Naive thymus-derived CD4-positive, alpha-beta T cell (primary cell): ENCODE measurements at regions of chr3 and their contacts with region 1.

Region 1: DNA sequence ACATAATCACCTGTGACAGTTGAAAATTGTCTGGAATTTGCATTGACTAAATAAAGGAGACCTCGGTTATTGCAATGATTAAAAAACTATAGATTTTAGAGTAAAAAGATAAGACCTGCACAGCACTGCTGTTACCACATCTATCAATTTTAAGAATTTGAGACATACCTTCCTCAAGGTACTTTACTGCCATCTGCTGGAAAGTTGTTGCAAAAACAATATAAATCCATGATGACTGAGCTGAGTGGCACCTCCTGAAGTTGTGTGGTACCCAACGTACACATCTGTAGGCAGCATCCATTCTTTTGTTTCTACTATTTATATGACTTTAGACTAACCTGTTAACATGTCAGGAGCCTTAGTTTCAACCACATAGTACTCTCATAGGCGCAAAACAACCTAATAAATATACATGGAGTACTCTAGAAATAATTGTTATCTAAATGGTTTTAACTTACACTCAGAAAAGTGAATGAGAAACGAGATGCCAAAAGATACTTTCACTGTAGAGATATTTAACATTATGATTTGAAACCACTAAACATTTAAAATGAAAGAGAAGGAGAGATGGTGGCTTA is 106.7 kb downstream of the GHSR start:
- DNase-seq: peak in 7 of 9 donors; percentile 30 to 73 (median 67)
- ATAC-seq: peak; percentile 85
- H3K4me3 ChIP-seq: no peak overlapping the region
- H3K4me3 Mint-ChIP-seq: no peak overlapping the region
- H3K27ac ChIP-seq: no peak overlapping the region
- H3K27ac Mint-ChIP-seq: no peak overlapping the region
- H3K4me1 ChIP-seq: no peaks in the 10 kb centered on the region
- H3K4me1 Mint-ChIP-seq: peaks cover 0 to 2% (median 0%) of the 10 kb centered on the region in 7 donors
- H3K27me3 ChIP-seq: no peaks in the 10 kb centered on the region
- H3K27me3 Mint-ChIP-seq: no peaks in the 10 kb centered on the region

Region 2: GRCh38 chr3:170961616-170962400 is 1379.8 kb before region 1 on chr3:
- CTCF ChIA-PET with region 1: interaction called, 4 read pairs
- POLR2A ChIA-PET with region 1: no interaction called
- intact Hi-C with region 1: loop called (anchors 1 to 5 kb)
- DNase-seq: peak in 5 of 9 donors; percentile 4 to 20 (median 14)
- ATAC-seq: no peak
- H3K4me3 ChIP-seq: no peak overlapping the region
- H3K4me3 Mint-ChIP-seq: no peak overlapping the region
- H3K27ac ChIP-seq: no peak overlapping the region
- H3K27ac Mint-ChIP-seq: peak overlapping the region in 1 of 9 donors; percentile 23
- H3K4me1 ChIP-seq: no peaks in the 10 kb centered on the region
- H3K4me1 Mint-ChIP-seq: no peaks in the 10 kb centered on the region
- H3K27me3 ChIP-seq: no peaks in the 10 kb centered on the region
- H3K27me3 Mint-ChIP-seq: peaks cover 0 to 23% (median 19%) of the 10 kb centered on the region in 5 donors

Region 3: GRCh38 chr3:171162986-171163723 is 1178.4 kb before region 1 on chr3:
- CTCF ChIA-PET with region 1: interaction called, 3 read pairs
- POLR2A ChIA-PET with region 1: no interaction called
- intact Hi-C with region 1: loop called in 1 of 2 experiments (anchors 10 kb)
- DNase-seq: peak in 7 of 9 donors; percentile 19 to 51 (median 47)
- ATAC-seq: peak; percentile 55
- H3K4me3 ChIP-seq: no peak overlapping the region
- H3K4me3 Mint-ChIP-seq: no peak overlapping the region
- H3K27ac ChIP-seq: no peak overlapping the region
- H3K27ac Mint-ChIP-seq: peak overlapping the region in 1 of 9 donors; percentile 56
- H3K4me1 ChIP-seq: no peaks in the 10 kb centered on the region
- H3K4me1 Mint-ChIP-seq: peaks cover 9 to 25% (median 19%) of the 10 kb centered on the region in 7 donors
- H3K27me3 ChIP-seq: no peaks in the 10 kb centered on the region
- H3K27me3 Mint-ChIP-seq: no peaks in the 10 kb centered on the region

Region 4: DNA sequence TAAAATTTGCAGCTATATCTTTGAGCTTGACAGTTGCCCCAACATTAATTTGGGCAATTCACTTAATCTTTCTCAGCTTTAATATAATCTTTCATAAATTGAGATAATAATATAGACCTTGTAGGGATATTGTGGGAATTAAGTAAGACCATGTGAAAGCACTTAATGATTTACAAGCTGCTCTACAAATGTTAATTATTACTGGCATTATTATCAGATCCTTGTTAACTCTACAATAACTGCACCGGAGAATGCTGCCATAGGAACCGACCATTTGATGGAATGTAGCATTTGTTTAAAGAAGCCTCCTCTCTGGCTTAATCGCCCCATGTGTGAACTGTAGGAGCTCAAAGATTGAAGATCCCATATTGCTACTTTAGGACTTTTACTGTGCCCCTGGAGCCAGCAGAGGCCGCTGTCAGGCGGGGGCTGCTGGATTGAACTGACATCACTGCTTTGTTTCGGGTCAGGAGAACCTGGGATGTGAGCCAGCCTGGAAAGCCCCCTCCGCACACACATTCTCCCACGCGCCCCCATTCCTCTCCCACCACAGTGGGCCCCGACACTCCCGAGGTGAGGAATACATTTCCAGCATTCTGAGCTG is 727.2 kb before region 1 on chr3:
- CTCF ChIA-PET with region 1: interaction called, 5 read pairs
- POLR2A ChIA-PET with region 1: no interaction called
- intact Hi-C with region 1: loop called in 1 of 2 experiments (anchors 1 kb)
- DNase-seq: peak in 3 of 9 donors; percentile 1 to 22 (median 8)
- ATAC-seq: no peak
- H3K4me3 ChIP-seq: no peak overlapping the region
- H3K4me3 Mint-ChIP-seq: no peak overlapping the region
- H3K27ac ChIP-seq: no peak overlapping the region
- H3K27ac Mint-ChIP-seq: no peak overlapping the region
- H3K4me1 ChIP-seq: no peaks in the 10 kb centered on the region
- H3K4me1 Mint-ChIP-seq: no peaks in the 10 kb centered on the region
- H3K27me3 ChIP-seq: no peaks in the 10 kb centered on the region
- H3K27me3 Mint-ChIP-seq: peaks cover 0 to 39% (median 12%) of the 10 kb centered on the region in 5 donors

Region 5: GRCh38 chr3:171703756-171704401 is 637.7 kb before region 1 on chr3:
- CTCF ChIA-PET with region 1: no interaction called
- POLR2A ChIA-PET with region 1: no interaction called
- intact Hi-C with region 1: loop called (anchors 1 to 2 kb)
- DNase-seq: peak in 3 of 9 donors; percentile 4 to 5 (median 4)
- ATAC-seq: peak; percentile 58
- H3K4me3 ChIP-seq: no peak overlapping the region
- H3K4me3 Mint-ChIP-seq: no peak overlapping the region
- H3K27ac ChIP-seq: no peak overlapping the region
- H3K27ac Mint-ChIP-seq: no peak overlapping the region
- H3K4me1 ChIP-seq: no peaks in the 10 kb centered on the region
- H3K4me1 Mint-ChIP-seq: peaks cover 0 to 2% (median 0%) of the 10 kb centered on the region in 7 donors
- H3K27me3 ChIP-seq: no peaks in the 10 kb centered on the region
- H3K27me3 Mint-ChIP-seq: peaks cover 12 to 24% (median 19%) of the 10 kb centered on the region in 5 donors

Region 6: GRCh38 chr3:171833789-171834460 is 507.6 kb before region 1 on chr3:
- CTCF ChIA-PET with region 1: no interaction called
- POLR2A ChIA-PET with region 1: no interaction called
- intact Hi-C with region 1: loop called in 1 of 2 experiments (anchors 2 kb)
- DNase-seq: no peak
- ATAC-seq: peak; percentile 47
- H3K4me3 ChIP-seq: no peak overlapping the region
- H3K4me3 Mint-ChIP-seq: no peak overlapping the region
- H3K27ac ChIP-seq: no peak overlapping the region
- H3K27ac Mint-ChIP-seq: no peak overlapping the region
- H3K4me1 ChIP-seq: no peaks in the 10 kb centered on the region
- H3K4me1 Mint-ChIP-seq: peaks cover 0 to 6% (median 0%) of the 10 kb centered on the region in 7 donors
- H3K27me3 ChIP-seq: no peaks in the 10 kb centered on the region
- H3K27me3 Mint-ChIP-seq: peaks cover 4 to 34% (median 14%) of the 10 kb centered on the region in 5 donors

Region 7: DNA sequence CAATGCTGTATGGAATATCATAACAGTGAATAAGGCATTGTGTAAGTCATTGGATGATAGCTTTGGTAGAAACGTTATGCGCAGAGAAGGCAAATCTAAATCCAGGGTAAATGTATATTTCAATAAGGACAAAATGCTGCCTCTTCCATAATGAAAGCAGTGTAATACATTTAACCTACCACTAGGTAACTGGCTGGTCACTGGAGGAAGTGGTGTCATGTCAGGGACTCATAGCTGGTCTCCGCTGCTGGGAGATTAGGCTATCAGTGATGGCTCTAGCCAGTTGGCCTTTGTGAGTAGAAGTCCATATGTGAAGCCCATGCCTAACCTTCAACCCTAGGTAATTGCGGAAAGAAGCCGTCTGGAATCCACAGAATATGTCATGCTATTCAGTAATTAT is 1196.8 kb after region 1 on chr3:
- CTCF ChIA-PET with region 1: no interaction called
- POLR2A ChIA-PET with region 1: no interaction called
- intact Hi-C with region 1: no loop called
- DNase-seq: no peak
- ATAC-seq: no peak
- H3K4me3 ChIP-seq: no peak overlapping the region
- H3K4me3 Mint-ChIP-seq: no peak overlapping the region
- H3K27ac ChIP-seq: no peak overlapping the region
- H3K27ac Mint-ChIP-seq: no peak overlapping the region
- H3K4me1 ChIP-seq: no peaks in the 10 kb centered on the region
- H3K4me1 Mint-ChIP-seq: no peaks in the 10 kb centered on the region
- H3K27me3 ChIP-seq: no peaks in the 10 kb centered on the region
- H3K27me3 Mint-ChIP-seq: no peaks in the 10 kb centered on the region